ENCODE measurements at regions of chr3 and their contacts with region 1.

Region 1: DNA sequence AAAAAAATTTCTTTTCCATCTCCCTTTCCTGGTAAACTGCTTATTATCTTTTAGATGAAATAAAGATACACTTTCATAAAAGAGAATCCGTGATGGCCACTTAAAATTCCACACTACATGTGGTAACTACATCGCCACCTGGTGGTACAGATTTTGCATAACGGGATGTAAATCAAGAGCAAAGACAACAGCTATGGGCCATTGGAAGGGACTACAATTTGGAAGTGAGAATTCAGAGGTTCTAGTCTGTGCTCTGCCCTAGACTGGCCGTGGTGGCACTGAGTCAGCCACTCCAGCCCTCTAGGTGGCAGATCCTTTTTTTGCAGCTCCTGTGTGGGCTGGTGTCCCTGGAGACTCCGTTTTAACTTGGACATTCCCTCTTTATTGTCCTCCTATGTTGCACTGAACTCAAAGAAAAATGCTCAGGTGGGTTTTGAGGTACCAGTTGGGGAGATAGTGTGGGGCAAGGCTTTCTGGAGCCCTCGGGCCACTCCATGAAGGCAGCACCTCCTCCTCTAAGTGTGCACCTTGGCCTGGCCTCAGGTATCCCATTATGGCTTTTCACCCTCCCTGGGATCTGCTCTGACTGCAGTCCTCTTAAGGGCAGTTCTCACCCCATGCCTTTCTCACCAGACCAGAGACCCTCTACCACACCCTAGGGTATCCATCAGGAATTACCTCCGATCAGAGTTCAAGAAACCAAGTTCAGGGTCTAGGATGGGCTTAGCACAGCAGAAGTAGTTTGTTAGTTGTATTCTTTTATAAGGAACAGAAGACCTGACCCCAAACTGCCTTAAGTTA is 54.9 kb downstream of the SPSB4 start:
- DNase-seq: peak in 1 of 2 experiments; percentile 70
- H3K4me3 ChIP-seq: no peak overlapping the region
- H3K27ac ChIP-seq: no peak overlapping the region
- H3K4me1 ChIP-seq: peaks cover 0 to 5% (median 4%) of the 10 kb centered on the region in 4 experiments; a peak in 5 of 7 replicates
- H3K27me3 ChIP-seq: no peaks in the 10 kb centered on the region
- CTCF ChIP-seq: peak in 2 of 3 experiments; percentile 76 to 83; a peak in 3 of 4 replicates
- EP300 ChIP-seq: no peak
- POLR2A ChIP-seq: no peak
- RAD21 ChIP-seq: peak; percentile 73 to 82

Region 2: GRCh38 chr3:140910860-140911259 is 195.2 kb before region 1 on chr3:
- CTCF ChIA-PET with region 1: no interaction called
- POLR2A ChIA-PET with region 1: no interaction called
- DNase-seq: peak; percentile 9 to 66
- H3K4me3 ChIP-seq: peak overlapping the region; percentile 35 to 54 (median 42); a peak in 6 of 8 replicates
- H3K27ac ChIP-seq: no peak overlapping the region
- H3K4me1 ChIP-seq: no peaks in the 10 kb centered on the region; a peak in 2 of 7 replicates
- H3K27me3 ChIP-seq: no peaks in the 10 kb centered on the region; a peak in 1 of 7 replicates
- CTCF ChIP-seq: peak in 2 of 3 experiments; percentile 21 to 43; a peak in 2 of 4 replicates
- EP300 ChIP-seq: no peak
- POLR2A ChIP-seq: no peak
- RAD21 ChIP-seq: no peak

Region 3: DNA sequence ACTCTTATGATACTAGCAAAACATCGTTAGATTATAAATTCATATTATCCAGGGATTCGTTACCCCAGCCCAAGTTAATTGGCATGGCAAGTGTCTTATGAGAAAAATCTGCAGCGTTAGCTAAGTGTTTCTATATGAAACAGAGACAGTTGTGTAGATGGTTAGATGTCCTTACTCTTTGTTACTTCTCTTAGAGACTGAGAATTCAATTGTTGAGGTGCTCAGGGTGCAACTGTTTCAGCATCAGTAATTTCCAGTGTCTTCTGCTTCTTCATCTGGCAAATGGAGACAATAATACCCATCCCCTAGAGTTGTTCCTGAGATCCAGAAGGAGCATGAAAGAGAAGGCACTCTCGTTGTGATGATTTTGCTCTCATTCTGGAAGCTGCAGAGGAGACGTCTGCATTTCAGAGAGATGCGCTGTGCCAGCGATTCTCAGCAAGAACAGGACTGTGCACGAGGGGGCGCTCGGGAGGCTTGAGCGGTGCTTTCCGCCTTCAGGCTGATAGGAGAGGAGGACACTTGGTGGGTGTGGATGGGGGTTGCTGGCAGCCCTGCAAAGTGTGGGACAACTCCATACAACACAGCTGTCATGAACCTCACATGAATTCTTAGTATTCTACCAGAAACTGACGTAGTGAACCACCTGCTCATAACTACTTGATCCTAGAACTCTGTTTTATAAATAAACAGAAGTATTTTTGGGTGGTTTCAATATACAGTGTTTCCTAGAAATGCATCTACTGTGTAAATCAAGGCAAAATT is 94.6 kb before region 1 on chr3:
- CTCF ChIA-PET with region 1: interaction called, 107 read pairs
- POLR2A ChIA-PET with region 1: interaction called, 3 read pairs
- DNase-seq: peak; percentile 66 to 98
- H3K4me3 ChIP-seq: no peak overlapping the region
- H3K27ac ChIP-seq: no peak overlapping the region
- H3K4me1 ChIP-seq: peaks cover 0 to 11% (median 0%) of the 10 kb centered on the region in 4 experiments; a peak in 2 of 7 replicates
- H3K27me3 ChIP-seq: peaks cover 0 to 2% (median 0%) of the 10 kb centered on the region in 4 experiments; a peak in 1 of 7 replicates
- CTCF ChIP-seq: peak; percentile 91 to 98 (median 96)
- EP300 ChIP-seq: no peak
- POLR2A ChIP-seq: no peak
- RAD21 ChIP-seq: peak; percentile 91 to 94

Region 4: GRCh38 chr3:141076797-141077571 is 29.0 kb before region 1 on chr3:
- CTCF ChIA-PET with region 1: interaction called, 238 read pairs
- POLR2A ChIA-PET with region 1: no interaction called
- DNase-seq: no peak
- H3K4me3 ChIP-seq: no peak overlapping the region
- H3K27ac ChIP-seq: no peak overlapping the region
- H3K4me1 ChIP-seq: peaks cover 47 to 67% (median 57%) of the 10 kb centered on the region in 4 experiments
- H3K27me3 ChIP-seq: peaks cover 0 to 6% (median 0%) of the 10 kb centered on the region in 4 experiments; a peak in 4 of 7 replicates
- CTCF ChIP-seq: no peak
- EP300 ChIP-seq: no peak
- POLR2A ChIP-seq: no peak
- RAD21 ChIP-seq: no peak

Region 5: GRCh38 chr3:141123677-141124410 is 17.8 kb after region 1 on chr3:
- CTCF ChIA-PET with region 1: interaction called, 12 read pairs
- POLR2A ChIA-PET with region 1: no interaction called
- DNase-seq: no peak
- H3K4me3 ChIP-seq: no peak overlapping the region
- H3K27ac ChIP-seq: no peak overlapping the region
- H3K4me1 ChIP-seq: 0 out of 7 replicates have a peak, but pooled peaks cover 0 to 2% (median 0%) of the 10 kb centered on the region in 4 experiments
- H3K27me3 ChIP-seq: no peaks in the 10 kb centered on the region
- CTCF ChIP-seq: no peak
- EP300 ChIP-seq: no peak
- POLR2A ChIP-seq: no peak
- RAD21 ChIP-seq: no peak